Panc1 (cell line): ENCODE measurements at regions of chr6 and their contacts with region 1.

Region 1: GRCh38 chr6:112043032-112044007 is 10.6 kb upstream of the CCN6 start:
- DNase-seq: peak; percentile 72
- ATAC-seq: peak; percentile 95
- H3K4me3 ChIP-seq: peak overlapping the region; percentile 81 to 83
- H3K27ac ChIP-seq: peak overlapping the region; percentile 81
- H3K4me1 ChIP-seq: peaks cover 4% of the 10 kb centered on the region; the same call in 1 of the 2 replicates
- H3K27me3 ChIP-seq: no peaks in the 10 kb centered on the region
- CTCF ChIP-seq: peak; percentile 97

Region 2: DNA sequence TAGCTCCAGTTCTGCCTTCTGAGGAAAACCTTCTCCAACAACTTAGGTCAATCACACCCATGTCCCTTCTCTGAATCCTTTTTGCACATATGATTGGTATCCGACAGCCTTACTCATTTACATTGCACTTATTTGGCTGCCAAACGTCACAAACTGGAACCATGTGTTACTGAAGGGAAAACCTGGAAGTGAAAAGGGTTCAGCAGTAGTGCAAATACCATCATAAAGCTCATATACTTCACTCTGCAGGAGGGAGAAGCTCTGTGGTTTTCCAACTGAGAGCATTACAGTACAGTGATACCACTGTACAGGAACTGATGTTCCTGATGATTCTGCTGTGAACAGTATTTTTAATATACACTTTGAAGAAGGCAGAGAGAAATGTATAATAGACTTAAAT is 868.2 kb before region 1 on chr6:
- CTCF ChIA-PET with region 1: no interaction called
- POLR2A ChIA-PET with region 1: no interaction called
- in situ Hi-C with region 1: no loop called
- intact Hi-C with region 1: no loop called
- DNase-seq: no peak
- ATAC-seq: no peak
- H3K4me3 ChIP-seq: no peak overlapping the region
- H3K27ac ChIP-seq: no peak overlapping the region
- H3K4me1 ChIP-seq: no peaks in the 10 kb centered on the region
- H3K27me3 ChIP-seq: peaks cover 38% of the 10 kb centered on the region
- CTCF ChIP-seq: no peak

Region 3: DNA sequence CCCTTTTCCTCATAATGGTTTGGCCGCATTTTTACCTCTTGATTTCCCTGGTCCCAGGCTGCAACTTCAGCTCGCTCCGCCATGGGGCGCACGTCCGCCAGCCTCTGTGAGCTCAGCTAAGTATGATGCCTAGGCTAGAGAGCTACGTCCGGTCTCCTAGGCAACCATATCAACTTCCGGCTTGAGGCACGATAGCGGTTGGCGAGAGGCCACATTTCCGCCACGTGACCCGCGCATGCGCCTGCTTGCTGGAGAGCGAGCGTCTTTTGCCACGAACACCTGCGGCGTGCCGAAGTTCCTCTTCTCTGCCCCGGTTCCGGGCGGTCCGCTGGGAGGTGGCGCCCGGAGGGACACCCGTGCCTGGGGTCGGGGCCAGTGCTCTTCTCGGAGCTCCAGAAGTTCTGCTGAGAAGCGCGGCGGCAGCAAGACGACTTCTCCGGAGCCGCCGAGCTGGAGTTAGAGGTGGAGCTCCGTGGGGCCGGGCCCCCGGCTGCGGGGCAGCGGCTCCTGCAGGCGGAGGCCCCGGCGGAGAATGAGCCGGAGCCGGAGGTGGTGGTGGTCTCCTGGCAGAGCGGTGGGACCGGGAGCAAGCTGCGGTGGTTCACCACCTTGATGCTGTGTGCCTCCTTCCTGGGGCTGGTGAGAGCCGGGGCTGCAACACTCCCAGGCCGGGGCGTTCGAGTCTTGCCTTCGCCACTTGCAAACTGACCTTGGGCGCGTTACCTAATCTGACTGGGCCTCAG is 784.1 kb before region 1 on chr6:
- CTCF ChIA-PET with region 1: interaction called, 7 read pairs
- POLR2A ChIA-PET with region 1: no interaction called
- in situ Hi-C with region 1: no loop called
- intact Hi-C with region 1: loop called (anchors 10 kb)
- DNase-seq: peak; percentile 99
- ATAC-seq: peak; percentile 98
- H3K4me3 ChIP-seq: peak overlapping the region; percentile 77 to 87
- H3K27ac ChIP-seq: peak overlapping the region; percentile 90
- H3K4me1 ChIP-seq: peaks cover 27% of the 10 kb centered on the region
- H3K27me3 ChIP-seq: peaks cover 14% of the 10 kb centered on the region
- CTCF ChIP-seq: peak; percentile 100

Region 4: DNA sequence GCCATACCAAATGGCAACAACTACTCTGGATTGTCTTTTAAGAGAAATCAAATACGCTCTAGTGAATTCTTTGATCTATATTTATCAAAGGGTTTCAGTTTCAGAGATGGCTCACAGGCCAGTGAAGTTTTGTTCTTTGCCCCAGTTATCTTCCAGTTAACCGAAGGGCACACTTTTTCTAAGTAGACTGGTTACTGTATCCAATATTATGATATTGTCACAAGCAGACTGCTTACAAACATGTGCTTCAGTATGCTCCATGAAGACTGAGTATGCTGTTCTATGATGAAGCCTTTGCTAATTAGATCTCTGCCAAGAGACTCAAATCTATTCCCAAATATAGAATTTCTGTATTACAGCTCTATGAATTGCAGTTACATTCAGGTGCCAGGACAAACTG is 741.4 kb before region 1 on chr6:
- CTCF ChIA-PET with region 1: no interaction called
- POLR2A ChIA-PET with region 1: interaction called, 15 read pairs
- in situ Hi-C with region 1: no loop called
- intact Hi-C with region 1: no loop called
- DNase-seq: no peak
- ATAC-seq: no peak
- H3K4me3 ChIP-seq: no peak overlapping the region
- H3K27ac ChIP-seq: no peak overlapping the region
- H3K4me1 ChIP-seq: no peaks in the 10 kb centered on the region
- H3K27me3 ChIP-seq: no peaks in the 10 kb centered on the region
- CTCF ChIP-seq: no peak

Region 5: GRCh38 chr6:111478749-111479148 is 564.6 kb before region 1 on chr6:
- CTCF ChIA-PET with region 1: interaction called, 10 read pairs
- POLR2A ChIA-PET with region 1: no interaction called
- in situ Hi-C with region 1: no loop called
- intact Hi-C with region 1: no loop called
- DNase-seq: peak; percentile 61
- ATAC-seq: no peak
- H3K4me3 ChIP-seq: no peak overlapping the region; a peak in 1 of 4 replicates
- H3K27ac ChIP-seq: peak overlapping the region; percentile 98
- H3K4me1 ChIP-seq: peaks cover 57% of the 10 kb centered on the region
- H3K27me3 ChIP-seq: no peaks in the 10 kb centered on the region
- CTCF ChIP-seq: peak; percentile 68

Region 6: GRCh38 chr6:111709615-111710398 is 333.5 kb before region 1 on chr6:
- CTCF ChIA-PET with region 1: interaction called, 27 read pairs
- POLR2A ChIA-PET with region 1: no interaction called
- in situ Hi-C with region 1: no loop called
- intact Hi-C with region 1: loop called (anchors 1 kb)
- DNase-seq: peak; percentile 61
- ATAC-seq: peak; percentile 93
- H3K4me3 ChIP-seq: peak overlapping the region; percentile 20 to 39
- H3K27ac ChIP-seq: no peak overlapping the region
- H3K4me1 ChIP-seq: 0 out of 2 replicates have a peak, but pooled peaks cover 3% of the 10 kb centered on the region
- H3K27me3 ChIP-seq: peaks cover 5% of the 10 kb centered on the region
- CTCF ChIP-seq: peak; percentile 81

Region 7: DNA sequence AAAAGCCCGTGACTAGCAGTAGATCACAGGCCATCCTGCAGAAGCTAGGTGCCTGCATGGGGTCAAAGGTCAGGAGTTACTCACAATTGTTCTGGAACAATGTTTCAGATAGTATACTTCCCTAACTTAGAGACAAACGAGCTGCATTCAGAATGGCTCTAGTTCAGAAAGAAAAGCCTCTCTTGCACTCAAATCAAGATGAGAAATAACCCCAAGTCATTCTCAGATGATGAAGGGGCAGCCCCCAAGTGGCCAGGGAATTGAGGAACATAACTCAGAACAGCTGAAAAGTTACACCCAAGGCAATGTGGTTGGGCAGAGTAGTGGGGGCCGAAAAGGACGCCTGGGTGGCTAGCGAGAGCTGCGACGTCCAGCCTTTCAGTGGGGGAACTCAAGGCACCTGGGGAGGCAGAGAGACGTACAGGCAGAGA is 197.9 kb before region 1 on chr6:
- CTCF ChIA-PET with region 1: interaction called, 16 read pairs
- POLR2A ChIA-PET with region 1: no interaction called
- in situ Hi-C with region 1: no loop called
- intact Hi-C with region 1: no loop called
- DNase-seq: no peak
- ATAC-seq: no peak
- H3K4me3 ChIP-seq: no peak overlapping the region
- H3K27ac ChIP-seq: no peak overlapping the region
- H3K4me1 ChIP-seq: no peaks in the 10 kb centered on the region
- H3K27me3 ChIP-seq: peaks cover 3% of the 10 kb centered on the region; the same call in 1 of the 2 replicates
- CTCF ChIP-seq: no peak

Region 8: DNA sequence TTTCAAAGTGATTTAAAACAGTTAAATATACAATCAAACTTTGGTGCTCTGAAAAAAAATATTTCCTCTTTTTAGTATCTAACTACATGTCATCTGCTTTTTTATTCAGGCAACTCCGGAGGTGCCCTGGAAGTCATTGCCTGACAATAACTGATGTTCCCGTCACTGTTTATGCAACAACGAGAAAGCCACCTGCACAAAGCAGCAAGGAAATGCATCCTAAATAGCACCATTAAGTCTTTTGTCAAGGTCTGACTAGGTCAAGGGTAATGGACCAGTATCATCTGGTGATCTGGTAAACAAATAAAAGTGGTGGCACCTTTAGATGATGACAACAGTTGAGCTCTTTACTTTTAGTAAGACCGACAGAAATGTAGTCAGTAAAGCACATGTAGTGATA is 57.2 kb after region 1 on chr6:
- CTCF ChIA-PET with region 1: interaction called, 18 read pairs
- POLR2A ChIA-PET with region 1: no interaction called
- in situ Hi-C with region 1: no loop called
- intact Hi-C with region 1: no loop called
- DNase-seq: no peak
- ATAC-seq: no peak
- H3K4me3 ChIP-seq: no peak overlapping the region
- H3K27ac ChIP-seq: no peak overlapping the region
- H3K4me1 ChIP-seq: no peaks in the 10 kb centered on the region
- H3K27me3 ChIP-seq: no peaks in the 10 kb centered on the region
- CTCF ChIP-seq: no peak

Region 9: GRCh38 chr6:112221981-112222852 is 178.9 kb after region 1 on chr6:
- CTCF ChIA-PET with region 1: no interaction called
- POLR2A ChIA-PET with region 1: no interaction called
- in situ Hi-C with region 1: no loop called
- intact Hi-C with region 1: no loop called
- DNase-seq: no peak
- ATAC-seq: no peak
- H3K4me3 ChIP-seq: no peak overlapping the region
- H3K27ac ChIP-seq: no peak overlapping the region
- H3K4me1 ChIP-seq: no peaks in the 10 kb centered on the region
- H3K27me3 ChIP-seq: no peaks in the 10 kb centered on the region
- CTCF ChIP-seq: no peak

Region 10: GRCh38 chr6:112232845-112233256 is 189.5 kb after region 1 on chr6:
- CTCF ChIA-PET with region 1: no interaction called
- POLR2A ChIA-PET with region 1: no interaction called
- in situ Hi-C with region 1: no loop called
- intact Hi-C with region 1: no loop called
- DNase-seq: no peak
- ATAC-seq: no peak
- H3K4me3 ChIP-seq: no peak overlapping the region
- H3K27ac ChIP-seq: 0 out of 2 replicates have a peak overlapping the region, but pooled peaks have one; percentile 17
- H3K4me1 ChIP-seq: 0 out of 2 replicates have a peak, but pooled peaks cover 7% of the 10 kb centered on the region
- H3K27me3 ChIP-seq: no peaks in the 10 kb centered on the region
- CTCF ChIP-seq: no peak